ENCODE measurements at regions of chr17 and their contacts with region 1.

Region 1: GRCh38 chr17:42720996-42721583 is 23.8 kb downstream of the EZH1 start:
- DNase-seq: no peak
- ATAC-seq: peak; percentile 89
- H3K4me3 ChIP-seq: no peak overlapping the region
- H3K27ac ChIP-seq: no peak overlapping the region
- H3K4me1 ChIP-seq: no peaks in the 10 kb centered on the region
- H3K27me3 ChIP-seq: no peaks in the 10 kb centered on the region
- CTCF ChIP-seq: peak; percentile 65

Region 2: GRCh38 chr17:42760652-42761581 is 39.8 kb after region 1 on chr17 and contains the start of gene RAMP2:
- intact Hi-C with region 1: loop called (anchors 2 kb)
- DNase-seq: peak; percentile 69
- ATAC-seq: peak; percentile 57
- H3K4me3 ChIP-seq: peak within 1 kb of the TSS; percentile 58
- H3K27ac ChIP-seq: peak within 1 kb of the TSS; percentile 73
- H3K4me1 ChIP-seq: peaks cover 6% of the 10 kb centered on the region
- H3K27me3 ChIP-seq: peaks cover 23% of the 10 kb centered on the region
- CTCF ChIP-seq: no peak
- total RNA-seq, gene RAMP2: 114 TPM

Region 3: DNA sequence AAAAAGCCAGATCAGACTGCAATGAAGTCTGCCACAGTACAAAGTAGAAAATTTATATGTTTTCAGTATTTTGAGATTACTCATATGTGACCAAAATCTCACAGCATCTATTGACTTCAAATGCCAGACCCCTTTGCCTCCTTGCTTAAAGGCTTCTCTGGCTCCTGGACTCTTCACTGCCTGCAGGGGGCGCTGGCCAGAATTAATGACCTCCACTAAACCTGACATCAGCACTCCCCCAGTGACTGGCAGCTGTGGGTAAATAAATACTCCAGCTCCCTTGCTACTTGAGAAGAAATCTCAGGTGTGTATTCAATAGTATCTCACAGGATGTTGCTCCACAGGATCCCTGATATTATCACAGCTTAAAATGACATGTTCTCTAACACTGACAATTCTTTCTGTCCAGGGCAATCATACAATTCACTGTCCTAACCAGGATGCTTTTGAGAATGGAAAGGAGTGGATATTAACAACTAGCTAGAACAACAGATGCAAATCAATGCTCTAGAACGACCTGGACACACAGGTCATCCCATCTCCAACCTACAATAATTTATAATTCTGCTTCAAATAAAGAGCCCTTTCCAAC is 99.0 kb after region 1 on chr17:
- intact Hi-C with region 1: loop called (anchors 10 kb)
- DNase-seq: peak; percentile 74
- ATAC-seq: peak; percentile 30
- H3K4me3 ChIP-seq: no peak overlapping the region
- H3K27ac ChIP-seq: no peak overlapping the region
- H3K4me1 ChIP-seq: peaks cover 14% of the 10 kb centered on the region
- H3K27me3 ChIP-seq: no peaks in the 10 kb centered on the region
- CTCF ChIP-seq: peak; percentile 70